ENCODE measurements at regions of chr20 and their contacts with region 1.

Region 1: DNA sequence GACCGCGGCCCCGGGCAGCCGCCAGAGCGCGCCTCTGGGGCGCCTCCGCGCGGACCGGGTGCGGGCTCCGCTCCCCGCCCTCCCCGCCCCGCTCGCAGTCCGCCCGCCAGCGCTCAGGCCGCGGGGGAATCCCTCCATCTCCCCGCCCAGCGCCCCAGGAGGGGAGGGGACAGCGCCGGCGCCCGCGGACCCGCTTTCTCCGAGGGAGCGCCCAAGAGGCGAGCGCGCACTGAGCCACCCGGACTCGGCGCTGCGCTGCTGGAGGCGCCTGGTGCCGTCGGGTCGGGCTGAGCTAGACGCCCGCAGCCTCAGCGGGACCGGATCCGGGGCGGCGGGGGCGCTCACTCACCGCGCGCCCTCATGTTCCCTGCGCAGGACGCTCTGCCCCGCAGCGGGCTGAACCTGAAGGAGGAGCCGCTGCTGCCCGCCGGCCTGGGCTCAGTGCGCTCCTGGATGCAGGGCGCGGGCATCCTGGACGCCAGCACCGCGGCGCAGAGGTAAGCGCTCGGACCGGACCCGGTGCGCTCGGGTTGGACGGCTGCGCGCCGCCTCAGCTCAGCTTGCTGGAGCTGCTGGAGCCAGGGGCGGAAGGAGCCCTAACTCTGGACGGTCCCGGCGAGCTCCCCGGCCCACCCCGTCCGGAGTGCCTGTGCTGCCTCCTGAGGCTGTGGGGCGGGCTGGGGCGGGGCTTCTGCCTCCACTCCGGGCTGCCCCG is 863 bp downstream of the EBF4 start:
- DNase-seq: peak in 2 of 3 donors; percentile 65 to 73
- H3K4me3 ChIP-seq: peak overlapping the region in 5 of 7 experiments; percentile 26 to 63 (median 42)
- H3K27ac ChIP-seq: no peak overlapping the region
- H3K4me1 ChIP-seq: peaks cover 0 to 29% (median 14%) of the 10 kb centered on the region in 4 experiments
- H3K27me3 ChIP-seq: peaks cover 0 to 65% (median 24%) of the 10 kb centered on the region in 5 experiments

Region 2: DNA sequence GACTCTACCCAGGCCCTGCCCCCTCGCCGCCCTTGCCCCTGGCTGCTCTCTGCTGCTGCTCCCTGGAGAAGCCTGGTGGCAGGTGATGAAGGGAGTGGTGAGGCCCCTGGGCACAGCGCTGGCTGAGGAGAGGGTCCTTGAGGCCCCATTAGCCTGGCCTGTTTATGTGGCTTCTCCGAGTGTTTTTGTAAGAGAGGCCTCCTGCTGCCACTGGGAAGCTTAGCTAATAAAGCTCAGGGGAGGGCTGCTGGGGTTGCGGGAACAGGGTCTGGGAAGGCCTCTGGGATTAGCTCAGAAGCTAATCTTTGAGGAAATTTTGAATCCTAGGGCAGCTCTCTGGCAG is 14.6 kb after region 1 on chr20:
- CTCF ChIA-PET with region 1: interaction called, 24 read pairs
- POLR2A ChIA-PET with region 1: interaction called, 9 read pairs
- DNase-seq: no peak
- H3K4me3 ChIP-seq: no peak overlapping the region
- H3K27ac ChIP-seq: no peak overlapping the region
- H3K4me1 ChIP-seq: peaks cover 0 to 29% (median 27%) of the 10 kb centered on the region in 4 experiments
- H3K27me3 ChIP-seq: peaks cover 0 to 4% (median 0%) of the 10 kb centered on the region in 5 experiments